IMR-90 (cell line): ENCODE measurements at regions of chrX and their contacts with region 1.

Region 1: DNA sequence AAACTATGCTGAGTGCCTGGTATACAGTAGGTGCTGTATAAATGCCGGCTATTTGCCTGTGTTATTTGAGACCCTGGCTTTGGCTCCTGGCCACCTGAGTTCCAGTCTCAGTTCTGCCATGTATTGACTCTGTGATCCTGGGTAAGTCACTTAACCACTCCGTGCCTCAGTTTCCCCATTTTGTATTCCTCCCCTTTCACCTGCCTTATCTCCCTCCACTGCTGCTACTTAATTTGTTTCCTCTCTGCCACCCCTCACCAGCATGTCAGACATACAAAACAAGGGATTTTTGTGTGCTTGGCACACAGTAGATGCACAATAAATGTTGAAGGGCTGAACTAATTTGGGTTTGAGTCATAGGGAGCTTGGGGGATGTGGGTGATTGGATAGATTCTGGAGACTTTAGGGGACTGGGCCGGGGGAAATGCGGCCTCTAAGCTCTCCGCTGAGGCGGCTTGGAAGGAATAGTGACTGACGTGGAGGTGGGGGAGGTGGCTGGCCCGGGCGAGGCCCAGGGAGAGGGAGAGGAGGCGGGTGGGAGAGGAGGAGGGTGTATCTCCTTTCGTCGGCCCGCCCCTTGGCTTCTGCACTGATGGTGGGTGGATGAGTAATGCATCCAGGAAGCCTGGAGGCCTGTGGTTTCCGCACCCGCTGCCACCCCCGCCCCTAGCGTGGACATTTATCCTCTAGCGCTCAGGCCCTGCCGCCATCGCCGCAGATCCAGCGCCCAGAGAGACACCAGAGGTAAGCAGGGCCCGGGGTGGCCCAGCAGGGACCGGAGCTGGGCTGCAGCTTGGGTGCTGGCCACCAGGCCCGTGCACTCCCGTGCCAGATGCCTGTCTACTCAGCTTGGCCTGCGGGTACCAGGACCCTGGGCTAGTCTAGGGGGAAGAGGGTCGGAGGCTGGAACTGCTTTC is at the start of gene TIMP1:
- DNase-seq: peak; percentile 93
- ATAC-seq: peak; percentile 84
- H3K4me3 ChIP-seq: peak within 1 kb of the TSS; percentile 96
- H3K27ac ChIP-seq: peak within 1 kb of the TSS; percentile 95
- H3K4me1 ChIP-seq: peaks cover 26% of the 10 kb centered on the region
- H3K27me3 ChIP-seq: no peaks in the 10 kb centered on the region
- CTCF ChIP-seq: no peak
- POLR2A ChIP-seq: peak; percentile 95
- RAD21 ChIP-seq: 0 out of 2 replicates have a peak, but pooled peaks have one; percentile 9
- total RNA-seq, gene TIMP1: 407 and 512 TPM in 2 replicates

Region 2: DNA sequence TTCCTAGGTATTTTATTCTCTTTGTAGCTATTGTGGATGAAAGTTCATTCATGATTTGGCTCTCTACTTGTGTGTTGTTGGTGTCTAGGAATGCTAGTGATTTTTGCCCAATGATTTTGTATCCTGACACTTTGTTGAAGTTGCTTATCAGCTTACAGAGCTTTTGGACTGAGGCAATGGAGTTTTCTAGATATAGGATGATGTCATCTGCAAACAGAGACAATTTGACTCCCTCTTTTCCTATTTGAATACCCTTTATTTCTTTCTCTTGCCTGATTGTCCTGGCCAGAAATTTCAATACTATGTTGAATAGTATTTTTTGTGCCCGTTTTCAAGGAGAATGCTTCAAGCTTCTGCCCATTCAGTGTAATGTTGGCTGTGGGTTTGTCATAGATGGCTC is 1479.6 kb before region 1 on chrX:
- CTCF ChIA-PET with region 1: no interaction called
- POLR2A ChIA-PET with region 1: no interaction called
- dilution Hi-C with region 1: no loop called
- in situ Hi-C with region 1: no loop called
- intact Hi-C with region 1: no loop called
- DNase-seq: no peak
- ATAC-seq: no peak
- H3K4me3 ChIP-seq: no peak overlapping the region
- H3K27ac ChIP-seq: no peak overlapping the region
- H3K4me1 ChIP-seq: no peaks in the 10 kb centered on the region
- H3K27me3 ChIP-seq: no peaks in the 10 kb centered on the region
- CTCF ChIP-seq: no peak
- POLR2A ChIP-seq: no peak
- RAD21 ChIP-seq: no peak

Region 3: DNA sequence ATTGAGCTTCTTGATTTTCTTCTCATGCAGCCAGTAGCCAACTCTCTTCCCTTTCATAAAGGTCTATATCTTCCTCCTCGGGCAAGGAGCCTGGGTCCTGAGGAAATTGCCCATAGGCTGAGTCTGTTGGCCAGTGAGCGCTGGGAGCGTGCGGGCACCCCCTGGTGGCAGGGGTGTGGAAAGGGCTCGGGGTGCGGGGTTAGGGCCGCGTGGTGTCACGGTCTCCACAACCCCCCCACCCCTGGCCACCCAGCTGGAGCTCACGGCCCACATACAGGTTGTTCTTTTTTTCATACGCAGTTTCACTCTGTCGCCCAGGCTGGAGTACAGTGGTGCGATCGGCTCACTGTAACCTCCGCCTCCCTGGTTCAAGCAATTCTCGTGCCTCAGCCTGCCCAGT is 423.9 kb before region 1 on chrX:
- CTCF ChIA-PET with region 1: no interaction called
- POLR2A ChIA-PET with region 1: no interaction called
- dilution Hi-C with region 1: no loop called
- in situ Hi-C with region 1: no loop called
- intact Hi-C with region 1: no loop called
- DNase-seq: no peak
- ATAC-seq: no peak
- H3K4me3 ChIP-seq: no peak overlapping the region
- H3K27ac ChIP-seq: no peak overlapping the region
- H3K4me1 ChIP-seq: no peaks in the 10 kb centered on the region
- H3K27me3 ChIP-seq: no peaks in the 10 kb centered on the region; the same call in 1 of the 2 replicates
- CTCF ChIP-seq: no peak
- POLR2A ChIP-seq: no peak
- RAD21 ChIP-seq: no peak

Region 4: GRCh38 chrX:47540754-47541538 is 41.0 kb before region 1 on chrX:
- CTCF ChIA-PET with region 1: no interaction called
- POLR2A ChIA-PET with region 1: no interaction called
- dilution Hi-C with region 1: no loop called
- in situ Hi-C with region 1: no loop called
- intact Hi-C with region 1: loop called (anchors 2 kb)
- DNase-seq: peak; percentile 92
- ATAC-seq: peak; percentile 99
- H3K4me3 ChIP-seq: no peak overlapping the region
- H3K27ac ChIP-seq: peak overlapping the region; percentile 15; the same call in 1 of the 2 replicates
- H3K4me1 ChIP-seq: no peaks in the 10 kb centered on the region
- H3K27me3 ChIP-seq: no peaks in the 10 kb centered on the region
- CTCF ChIP-seq: peak; percentile 64
- POLR2A ChIP-seq: no peak; the same call in 1 of the 2 replicates
- RAD21 ChIP-seq: peak; percentile 61

Region 5: GRCh38 chrX:47658684-47659515 is 76.9 kb after region 1 on chrX and contains the start of gene UXT:
- CTCF ChIA-PET with region 1: no interaction called
- POLR2A ChIA-PET with region 1: interaction called, 14 read pairs
- dilution Hi-C with region 1: no loop called
- in situ Hi-C with region 1: no loop called
- intact Hi-C with region 1: no loop called
- DNase-seq: peak; percentile 94
- ATAC-seq: peak; percentile 89
- H3K4me3 ChIP-seq: peak within 1 kb of the TSS; percentile 87
- H3K27ac ChIP-seq: peak within 1 kb of the TSS; percentile 99
- H3K4me1 ChIP-seq: peaks cover 4% of the 10 kb centered on the region; the same call in 1 of the 2 replicates
- H3K27me3 ChIP-seq: no peaks in the 10 kb centered on the region
- CTCF ChIP-seq: no peak
- POLR2A ChIP-seq: peak; percentile 86; the same call in 1 of the 2 replicates
- RAD21 ChIP-seq: no peak
- total RNA-seq, gene UXT: 128 and 164 TPM in 2 replicates